ENCODE measurements at regions of chr1 and their contacts with region 1.

Region 1: GRCh38 chr1:24201941-24202440 is 14.9 kb upstream of the IFNLR1 start:
- DNase-seq: peak; percentile 86 to 89
- H3K4me3 ChIP-seq: no peak overlapping the region
- H3K27ac ChIP-seq: peak overlapping the region; percentile 76
- H3K4me1 ChIP-seq: peaks cover 27% of the 10 kb centered on the region
- H3K27me3 ChIP-seq: no peaks in the 10 kb centered on the region
- CTCF ChIP-seq: peak; percentile 86

Region 2: GRCh38 chr1:23772049-23772853 is 429.7 kb before region 1 on chr1:
- CTCF ChIA-PET with region 1: no interaction called
- POLR2A ChIA-PET with region 1: interaction called, 11 read pairs
- intact Hi-C with region 1: no loop called
- DNase-seq: peak; percentile 60 to 81
- H3K4me3 ChIP-seq: no peak overlapping the region
- H3K27ac ChIP-seq: no peak overlapping the region
- H3K4me1 ChIP-seq: peaks cover 11% of the 10 kb centered on the region; the same call in 1 of the 2 replicates
- H3K27me3 ChIP-seq: no peaks in the 10 kb centered on the region
- CTCF ChIP-seq: peak; percentile 82

Region 3: GRCh38 chr1:24150234-24151174 is 51.5 kb before region 1 on chr1:
- CTCF ChIA-PET with region 1: interaction called, 19 read pairs
- POLR2A ChIA-PET with region 1: interaction called, 16 read pairs
- intact Hi-C with region 1: loop called (anchors 1 kb)
- DNase-seq: peak; percentile 67 to 92
- H3K4me3 ChIP-seq: peak overlapping the region; percentile 39; the same call in 1 of the 2 replicates
- H3K27ac ChIP-seq: no peak overlapping the region
- H3K4me1 ChIP-seq: peaks cover 10% of the 10 kb centered on the region
- H3K27me3 ChIP-seq: no peaks in the 10 kb centered on the region
- CTCF ChIP-seq: peak; percentile 78

Region 4: DNA sequence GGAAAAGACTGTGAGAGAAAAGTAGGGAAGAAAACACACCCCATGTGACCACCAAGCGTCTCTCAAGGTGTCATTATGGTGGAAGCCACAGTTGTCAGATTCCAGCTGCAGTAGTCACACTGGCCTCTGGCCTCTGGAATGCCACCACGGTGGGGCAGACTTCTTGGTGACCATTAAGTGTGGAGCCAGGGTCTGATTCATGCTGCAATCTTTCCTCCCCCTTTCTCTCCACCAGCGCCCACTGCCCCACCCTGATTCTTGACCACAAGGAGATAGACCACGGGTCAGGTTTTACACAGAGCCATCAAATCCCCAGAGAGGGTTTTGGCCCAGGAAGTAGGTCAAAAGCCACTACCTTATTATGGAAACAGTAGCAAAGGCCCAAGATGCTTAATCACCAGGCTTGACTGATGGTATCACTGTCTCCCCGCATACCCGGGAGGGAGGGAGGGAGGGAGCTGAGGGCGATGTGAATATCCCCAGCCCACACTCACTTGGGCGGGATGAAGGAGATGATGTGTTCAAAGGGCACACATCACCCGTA is 64.5 kb after region 1 on chr1:
- CTCF ChIA-PET with region 1: interaction called, 8 read pairs
- POLR2A ChIA-PET with region 1: no interaction called
- intact Hi-C with region 1: loop called (anchors 1 kb)
- DNase-seq: peak; percentile 94 to 98
- H3K4me3 ChIP-seq: no peak overlapping the region
- H3K27ac ChIP-seq: peak overlapping the region; percentile 78
- H3K4me1 ChIP-seq: peaks cover 50% of the 10 kb centered on the region
- H3K27me3 ChIP-seq: no peaks in the 10 kb centered on the region
- CTCF ChIP-seq: 0 out of 2 replicates have a peak, but pooled peaks have one; percentile 19

Region 5: DNA sequence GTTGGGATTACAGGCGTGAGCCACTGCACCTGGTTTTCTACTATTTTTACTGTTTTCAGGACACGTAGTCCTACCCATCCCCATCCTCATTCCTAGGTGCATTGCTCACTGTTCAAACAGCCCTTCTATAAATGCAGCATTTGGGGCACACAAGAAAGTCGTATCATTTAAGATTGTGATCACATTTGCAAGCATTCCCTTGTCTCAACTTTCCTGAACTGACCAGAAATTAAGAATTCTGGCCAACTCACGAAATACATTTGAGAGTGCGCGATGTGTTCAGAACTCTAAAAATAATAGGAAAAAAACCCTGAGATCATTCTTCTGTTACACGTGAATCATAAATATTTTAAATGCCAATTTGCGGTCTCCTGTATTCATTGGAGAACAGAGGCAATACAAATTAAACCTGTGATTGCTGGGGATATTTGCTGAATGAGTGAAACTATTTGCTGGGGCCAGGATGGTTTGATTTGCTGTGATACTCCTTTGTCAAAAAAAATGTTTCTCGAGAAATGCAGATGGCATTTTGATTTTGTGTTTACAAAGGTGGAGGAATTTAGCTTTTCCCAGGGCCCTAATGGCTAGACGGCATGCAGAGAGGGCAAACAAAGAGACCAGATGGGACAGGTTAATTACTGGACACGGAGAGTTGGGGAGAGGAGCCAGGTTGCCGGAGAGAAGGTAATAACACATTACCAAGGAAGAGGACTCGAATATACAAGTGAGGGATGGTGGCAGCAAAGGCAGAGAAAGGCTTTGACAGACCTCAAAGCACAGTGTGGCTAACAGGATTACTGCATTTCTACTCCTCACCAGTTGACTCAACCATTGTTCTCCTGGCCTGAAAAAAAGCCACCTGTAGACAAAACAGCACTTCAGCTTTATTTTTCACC is 173.1 kb after region 1 on chr1:
- CTCF ChIA-PET with region 1: interaction called, 3 read pairs
- POLR2A ChIA-PET with region 1: interaction called, 3 read pairs
- intact Hi-C with region 1: loop called (anchors 1 kb)
- DNase-seq: peak; percentile 51 to 92
- H3K4me3 ChIP-seq: peak overlapping the region; percentile 34; the same call in 1 of the 2 replicates
- H3K27ac ChIP-seq: peak overlapping the region; percentile 95
- H3K4me1 ChIP-seq: peaks cover 39% of the 10 kb centered on the region
- H3K27me3 ChIP-seq: no peaks in the 10 kb centered on the region
- CTCF ChIP-seq: no peak

Region 6: GRCh38 chr1:24409535-24409934 is 207.5 kb after region 1 on chr1:
- CTCF ChIA-PET with region 1: interaction called, 10 read pairs
- POLR2A ChIA-PET with region 1: no interaction called
- intact Hi-C with region 1: no loop called
- DNase-seq: peak in 1 of 2 experiments; percentile 78
- H3K4me3 ChIP-seq: no peak overlapping the region
- H3K27ac ChIP-seq: peak overlapping the region; percentile 64
- H3K4me1 ChIP-seq: peaks cover 30% of the 10 kb centered on the region
- H3K27me3 ChIP-seq: no peaks in the 10 kb centered on the region
- CTCF ChIP-seq: no peak

Region 7: DNA sequence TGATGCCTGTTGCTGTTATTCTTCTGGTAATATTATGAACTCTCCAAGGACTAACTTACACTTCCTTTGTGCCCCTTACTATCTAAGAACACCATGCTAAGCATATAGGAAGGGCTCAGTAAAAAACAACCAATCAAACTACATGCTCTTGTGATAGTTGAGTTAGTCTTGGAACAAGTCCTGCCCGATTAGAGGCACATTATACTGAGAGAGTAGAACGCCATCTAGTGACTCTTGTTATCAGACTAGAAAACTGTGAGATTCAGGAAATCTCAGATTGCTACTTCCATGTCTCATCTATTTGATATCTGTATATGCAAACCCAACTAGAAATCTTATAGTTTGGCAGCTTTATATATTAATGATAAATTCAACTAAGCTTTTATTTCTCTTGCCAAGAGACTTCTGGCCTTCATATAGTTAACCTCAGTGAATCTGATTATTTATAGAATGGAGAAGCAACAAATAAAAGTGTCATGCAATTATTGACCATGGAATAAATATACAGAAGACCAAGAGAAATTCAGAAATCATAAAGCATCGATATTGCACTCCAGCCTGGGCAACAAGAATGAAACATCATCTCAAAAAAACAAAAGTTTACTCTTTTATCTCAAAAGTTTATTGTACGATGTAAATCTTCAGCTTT is 433.3 kb after region 1 on chr1:
- CTCF ChIA-PET with region 1: no interaction called
- POLR2A ChIA-PET with region 1: no interaction called
- intact Hi-C with region 1: loop called (anchors 1 kb)
- DNase-seq: peak in 1 of 2 experiments; percentile 46
- H3K4me3 ChIP-seq: no peak overlapping the region
- H3K27ac ChIP-seq: no peak overlapping the region
- H3K4me1 ChIP-seq: no peaks in the 10 kb centered on the region
- H3K27me3 ChIP-seq: no peaks in the 10 kb centered on the region
- CTCF ChIP-seq: peak; percentile 69

Measured in PC-9 (cell line).